ENCODE measurements at regions of chr2 and their contacts with region 1.

Region 1: GRCh38 chr2:97663965-97664635 is at the start of gene ACTR1B:
- DNase-seq: peak; percentile 99
- ATAC-seq: peak; percentile 88
- H3K4me3 Mint-ChIP-seq: peak within 1 kb of the TSS; percentile 91
- H3K27ac Mint-ChIP-seq: peak within 1 kb of the TSS; percentile 99
- H3K4me1 Mint-ChIP-seq: peaks cover 34% of the 10 kb centered on the region
- H3K27me3 Mint-ChIP-seq: no peaks in the 10 kb centered on the region
- total RNA-seq, gene ACTR1B: 87.4 to 94.3 TPM

Region 2: GRCh38 chr2:97645695-97646629 is 18.1 kb before region 1 on chr2 and contains the start of gene COX5B:
- CTCF ChIA-PET with region 1: interaction called, 102 read pairs
- DNase-seq: peak; percentile 99
- ATAC-seq: peak; percentile 98
- H3K4me3 Mint-ChIP-seq: peak within 1 kb of the TSS; percentile 77
- H3K27ac Mint-ChIP-seq: peak within 1 kb of the TSS; percentile 93
- H3K4me1 Mint-ChIP-seq: peaks cover 27% of the 10 kb centered on the region
- H3K27me3 Mint-ChIP-seq: peaks cover 3% of the 10 kb centered on the region
- total RNA-seq, gene COX5B: 206 to 236 TPM

Region 3: GRCh38 chr2:97747716-97748115 is 83.6 kb after region 1 on chr2:
- CTCF ChIA-PET with region 1: interaction called, 14 read pairs
- DNase-seq: no peak
- ATAC-seq: no peak
- H3K4me3 Mint-ChIP-seq: no peak overlapping the region
- H3K27ac Mint-ChIP-seq: peak overlapping the region; percentile 71
- H3K4me1 Mint-ChIP-seq: peaks cover 56% of the 10 kb centered on the region
- H3K27me3 Mint-ChIP-seq: no peaks in the 10 kb centered on the region